ENCODE measurements at regions of chr16 and their contacts with region 1.

Region 1: DNA sequence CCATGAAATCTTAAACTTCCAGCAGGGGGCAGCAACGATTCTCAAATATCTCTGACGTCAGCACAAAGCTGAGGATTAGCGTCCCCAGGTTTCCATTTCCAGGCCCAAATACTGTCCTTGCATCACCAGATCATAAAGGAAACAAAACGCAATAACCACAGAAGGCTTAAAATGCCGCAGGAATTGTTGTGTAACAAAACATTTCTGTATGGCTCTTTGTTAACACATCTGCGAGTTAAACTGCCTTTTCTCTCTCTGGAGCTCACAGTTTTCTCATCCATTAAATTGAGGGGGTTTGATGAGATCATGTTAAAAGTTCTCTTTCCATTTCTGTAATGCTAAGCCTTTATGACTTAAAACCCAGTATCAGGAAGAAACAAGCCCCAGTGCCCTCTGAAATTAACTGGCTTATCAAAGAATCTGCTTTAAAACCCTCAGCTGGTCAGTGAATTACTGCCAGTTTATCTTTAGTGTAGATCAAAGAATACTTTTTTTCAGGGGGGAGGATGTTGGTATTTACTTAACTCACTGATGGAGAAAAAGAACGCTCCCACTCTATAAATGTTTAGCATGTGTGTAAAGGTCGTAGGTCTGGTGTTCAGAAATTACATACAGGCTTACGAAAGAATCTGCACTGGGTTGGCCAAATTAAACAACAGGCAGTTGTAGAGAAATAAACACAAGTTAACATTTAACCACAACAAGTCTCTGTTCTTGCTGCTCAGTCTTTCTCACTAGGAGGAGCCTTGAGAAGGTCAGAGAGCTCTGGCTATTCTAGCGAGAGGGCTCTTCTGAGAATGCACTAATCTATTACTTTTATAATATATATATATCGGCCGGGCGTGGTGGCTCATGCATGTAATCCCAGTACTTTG is 10.6 kb upstream of the TERF2 start:
- DNase-seq: peak; percentile 36 to 88 (median 59)
- ATAC-seq: peak; percentile 80
- H3K4me3 ChIP-seq: no peak overlapping the region
- H3K4me3 Mint-ChIP-seq: no peak overlapping the region
- H3K27ac ChIP-seq: peak overlapping the region in 1 of 2 donors; percentile 15
- H3K27ac Mint-ChIP-seq: peak overlapping the region; percentile 8
- H3K4me1 ChIP-seq: peaks cover 3% of the 10 kb centered on the region
- H3K4me1 Mint-ChIP-seq: peaks cover 6% of the 10 kb centered on the region
- H3K27me3 ChIP-seq: no peaks in the 10 kb centered on the region
- H3K27me3 Mint-ChIP-seq: no peaks in the 10 kb centered on the region
- CTCF ChIP-seq: peak; percentile 44

Region 2: GRCh38 chr16:69367980-69368379 is 28.4 kb before region 1 on chr16:
- CTCF ChIA-PET with region 1: no interaction called
- POLR2A ChIA-PET with region 1: no interaction called
- intact Hi-C with region 1: no loop called
- DNase-seq: no peak
- ATAC-seq: no peak
- H3K4me3 ChIP-seq: no peak overlapping the region
- H3K4me3 Mint-ChIP-seq: no peak overlapping the region
- H3K27ac ChIP-seq: no peak overlapping the region
- H3K27ac Mint-ChIP-seq: no peak overlapping the region
- H3K4me1 ChIP-seq: no peaks in the 10 kb centered on the region
- H3K4me1 Mint-ChIP-seq: peaks cover 8% of the 10 kb centered on the region
- H3K27me3 ChIP-seq: no peaks in the 10 kb centered on the region
- H3K27me3 Mint-ChIP-seq: no peaks in the 10 kb centered on the region
- CTCF ChIP-seq: no peak

Region 3: GRCh38 chr16:69465083-69465721 is 68.8 kb after region 1 on chr16:
- CTCF ChIA-PET with region 1: interaction called, 8 read pairs
- POLR2A ChIA-PET with region 1: interaction called, 4 read pairs
- intact Hi-C with region 1: loop called (anchors 1 to 5 kb)
- DNase-seq: peak in 10 of 14 experiments; percentile 3 to 46 (median 14)
- ATAC-seq: peak; percentile 77
- H3K4me3 ChIP-seq: no peak overlapping the region
- H3K4me3 Mint-ChIP-seq: peak overlapping the region; percentile 8
- H3K27ac ChIP-seq: peak overlapping the region in 1 of 2 donors; percentile 25
- H3K27ac Mint-ChIP-seq: peak overlapping the region; percentile 81
- H3K4me1 ChIP-seq: peaks cover 20% of the 10 kb centered on the region
- H3K4me1 Mint-ChIP-seq: peaks cover 44% of the 10 kb centered on the region
- H3K27me3 ChIP-seq: no peaks in the 10 kb centered on the region
- H3K27me3 Mint-ChIP-seq: no peaks in the 10 kb centered on the region
- CTCF ChIP-seq: no peak

Region 4: DNA sequence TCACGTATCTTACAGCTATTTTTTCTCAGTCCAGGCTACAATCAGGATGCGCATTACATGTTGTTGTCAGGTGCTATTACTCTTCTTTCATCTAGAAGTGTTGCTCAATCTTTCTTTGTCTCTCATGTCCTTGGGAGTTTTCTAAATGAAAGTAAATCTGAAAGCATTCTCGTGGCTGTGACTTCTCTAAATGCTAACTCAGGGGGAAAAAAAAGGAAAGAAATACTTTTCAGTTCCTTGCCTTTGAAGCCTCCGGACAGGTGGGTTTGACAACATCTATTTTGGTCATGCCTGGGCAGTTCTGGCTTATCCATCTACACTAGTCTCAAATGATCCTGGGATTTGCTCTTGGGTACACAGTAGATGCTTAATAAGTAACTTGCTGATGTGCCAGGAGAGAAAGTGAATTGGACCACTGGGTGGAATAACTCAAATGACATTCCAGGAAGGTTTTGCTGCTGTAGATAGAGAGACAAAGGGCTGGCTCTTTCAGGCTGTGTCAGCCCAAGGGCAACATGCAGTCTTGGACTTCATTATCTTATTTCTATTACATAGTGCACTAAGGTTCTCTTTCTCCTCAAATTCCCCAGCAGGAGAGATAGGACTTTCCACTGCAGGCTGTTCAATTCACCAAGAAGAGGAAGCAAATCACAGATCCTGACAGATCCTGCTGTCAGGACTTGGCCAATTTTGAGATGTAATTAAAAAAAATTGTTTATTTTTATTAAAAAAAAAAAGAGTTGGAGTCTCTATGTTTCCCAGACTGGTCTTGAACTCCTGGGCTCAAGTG is 105.7 kb after region 1 on chr16:
- CTCF ChIA-PET with region 1: no interaction called
- POLR2A ChIA-PET with region 1: no interaction called
- intact Hi-C with region 1: no loop called
- DNase-seq: no peak
- ATAC-seq: no peak
- H3K4me3 ChIP-seq: no peak overlapping the region
- H3K4me3 Mint-ChIP-seq: no peak overlapping the region
- H3K27ac ChIP-seq: no peak overlapping the region
- H3K27ac Mint-ChIP-seq: no peak overlapping the region
- H3K4me1 ChIP-seq: no peaks in the 10 kb centered on the region
- H3K4me1 Mint-ChIP-seq: no peaks in the 10 kb centered on the region
- H3K27me3 ChIP-seq: no peaks in the 10 kb centered on the region
- H3K27me3 Mint-ChIP-seq: no peaks in the 10 kb centered on the region
- CTCF ChIP-seq: no peak

Region 5: GRCh38 chr16:69644790-69645189 is 248.4 kb after region 1 on chr16:
- CTCF ChIA-PET with region 1: no interaction called
- POLR2A ChIA-PET with region 1: no interaction called
- intact Hi-C with region 1: loop called in 1 of 2 experiments (anchors 10 kb)
- DNase-seq: no peak
- ATAC-seq: no peak
- H3K4me3 ChIP-seq: no peak overlapping the region
- H3K4me3 Mint-ChIP-seq: no peak overlapping the region
- H3K27ac ChIP-seq: no peak overlapping the region
- H3K27ac Mint-ChIP-seq: no peak overlapping the region
- H3K4me1 ChIP-seq: no peaks in the 10 kb centered on the region
- H3K4me1 Mint-ChIP-seq: peaks cover 5% of the 10 kb centered on the region
- H3K27me3 ChIP-seq: no peaks in the 10 kb centered on the region
- H3K27me3 Mint-ChIP-seq: no peaks in the 10 kb centered on the region
- CTCF ChIP-seq: no peak

Region 6: GRCh38 chr16:69754469-69755310 is 358.3 kb after region 1 on chr16 and contains the start of gene NOB1:
- CTCF ChIA-PET with region 1: interaction called, 3 read pairs
- POLR2A ChIA-PET with region 1: interaction called, 11 read pairs
- intact Hi-C with region 1: no loop called
- DNase-seq: peak; percentile 92 to 100 (median 97)
- ATAC-seq: peak; percentile 96
- H3K4me3 ChIP-seq: peak within 1 kb of the TSS; percentile 100
- H3K4me3 Mint-ChIP-seq: peak within 1 kb of the TSS; percentile 100
- H3K27ac ChIP-seq: peak within 1 kb of the TSS; percentile 71 to 78
- H3K27ac Mint-ChIP-seq: peak within 1 kb of the TSS; percentile 89
- H3K4me1 ChIP-seq: peaks cover 24% of the 10 kb centered on the region
- H3K4me1 Mint-ChIP-seq: peaks cover 34% of the 10 kb centered on the region
- H3K27me3 ChIP-seq: no peaks in the 10 kb centered on the region
- H3K27me3 Mint-ChIP-seq: no peaks in the 10 kb centered on the region
- CTCF ChIP-seq: peak; percentile 88
- total RNA-seq, gene NOB1: 31.0 to 33.9 TPM

Region 7: DNA sequence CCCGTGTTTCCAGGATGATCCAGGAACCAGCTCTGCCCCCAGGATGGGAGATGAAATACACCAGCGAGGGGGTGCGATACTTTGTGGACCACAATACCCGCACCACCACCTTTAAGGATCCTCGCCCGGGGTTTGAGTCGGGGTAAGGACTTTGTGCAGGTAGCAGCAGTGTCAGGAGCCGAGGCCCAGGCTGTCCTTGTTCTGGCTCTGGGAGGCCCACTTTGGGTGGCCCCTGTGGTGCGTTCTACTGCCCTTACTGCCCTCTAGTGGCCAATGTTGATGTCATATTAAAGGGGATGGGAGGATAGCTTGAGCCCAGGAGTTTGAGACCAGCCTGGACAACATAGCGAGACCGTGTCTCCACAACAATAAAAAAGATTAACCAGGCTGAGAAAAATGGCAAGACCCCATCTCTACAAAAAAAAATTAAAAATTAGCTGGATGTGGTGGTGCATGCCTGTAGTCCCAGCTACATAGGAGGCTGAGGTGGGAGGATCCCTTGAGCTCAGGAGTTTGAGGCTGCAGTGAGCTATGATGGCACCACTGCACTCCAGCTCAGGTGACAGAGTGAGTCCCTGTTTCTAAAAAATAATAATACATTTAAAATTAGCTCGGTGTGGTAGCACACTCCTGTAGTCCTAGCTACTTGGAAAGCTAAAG is 533.8 kb after region 1 on chr16:
- CTCF ChIA-PET with region 1: no interaction called
- POLR2A ChIA-PET with region 1: no interaction called
- intact Hi-C with region 1: loop called in 1 of 2 experiments (anchors 10 kb)
- DNase-seq: peak in 12 of 14 experiments; percentile 1 to 71 (median 34)
- ATAC-seq: peak; percentile 67
- H3K4me3 ChIP-seq: no peak overlapping the region
- H3K4me3 Mint-ChIP-seq: no peak overlapping the region
- H3K27ac ChIP-seq: no peak overlapping the region
- H3K27ac Mint-ChIP-seq: no peak overlapping the region
- H3K4me1 ChIP-seq: no peaks in the 10 kb centered on the region
- H3K4me1 Mint-ChIP-seq: no peaks in the 10 kb centered on the region
- H3K27me3 ChIP-seq: no peaks in the 10 kb centered on the region
- H3K27me3 Mint-ChIP-seq: no peaks in the 10 kb centered on the region
- CTCF ChIP-seq: peak; percentile 80